ENCODE measurements at regions of chr1 and their contacts with region 1.

Region 1: DNA sequence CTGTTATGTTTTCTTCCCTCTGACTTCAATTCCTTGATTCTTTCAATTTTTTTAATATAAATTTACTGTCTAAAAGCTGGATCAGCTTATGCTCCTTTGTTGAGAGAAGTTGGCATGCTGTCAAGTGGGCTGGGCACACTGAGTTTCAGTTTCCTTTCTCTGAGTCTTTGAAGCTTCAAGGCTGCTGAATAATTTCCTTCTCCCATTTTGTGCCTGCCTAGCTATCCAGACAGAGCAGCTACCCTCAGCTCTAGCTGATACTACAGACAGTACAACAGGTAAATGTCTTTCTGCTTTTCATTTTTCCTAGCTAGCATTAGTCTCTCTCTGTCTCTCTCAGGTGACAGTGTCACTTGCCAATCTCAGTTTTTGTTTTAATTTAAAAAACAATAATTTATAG is at the start of gene IFI44:
- DNase-seq: peak; percentile 22 to 83 (median 79)
- ATAC-seq: peak; percentile 91
- H3K4me3 ChIP-seq: peak within 1 kb of the TSS; percentile 68
- H3K4me3 Mint-ChIP-seq: peak within 1 kb of the TSS; percentile 81 to 100 (median 92)
- H3K27ac ChIP-seq: peak within 1 kb of the TSS; percentile 67
- H3K27ac Mint-ChIP-seq: peak within 1 kb of the TSS; percentile 82 to 97 (median 93)
- H3K4me1 ChIP-seq: peaks cover 36 to 40% of the 10 kb centered on the region in 2 donors
- H3K4me1 Mint-ChIP-seq: peaks cover 39 to 80% (median 64%) of the 10 kb centered on the region in 7 donors
- H3K27me3 ChIP-seq: no peaks in the 10 kb centered on the region
- H3K27me3 Mint-ChIP-seq: no peaks in the 10 kb centered on the region
- total RNA-seq, gene IFI44: 24.3 to 142 (median 33.1) TPM

Region 2: GRCh38 chr1:77970192-77970591 is 679.4 kb before region 1 on chr1:
- CTCF ChIA-PET with region 1: no interaction called
- POLR2A ChIA-PET with region 1: no interaction called
- intact Hi-C with region 1: loop called in 1 of 2 experiments (anchors 5 kb)
- DNase-seq: no peak
- ATAC-seq: no peak
- H3K4me3 ChIP-seq: no peak overlapping the region
- H3K4me3 Mint-ChIP-seq: peak overlapping the region in 5 of 10 donors; percentile 23 to 75 (median 56)
- H3K27ac ChIP-seq: no peak overlapping the region
- H3K27ac Mint-ChIP-seq: no peak overlapping the region
- H3K4me1 ChIP-seq: peaks cover 43 to 58% of the 10 kb centered on the region in 2 donors
- H3K4me1 Mint-ChIP-seq: peaks cover 41 to 90% (median 77%) of the 10 kb centered on the region in 7 donors
- H3K27me3 ChIP-seq: no peaks in the 10 kb centered on the region
- H3K27me3 Mint-ChIP-seq: no peaks in the 10 kb centered on the region

Region 3: DNA sequence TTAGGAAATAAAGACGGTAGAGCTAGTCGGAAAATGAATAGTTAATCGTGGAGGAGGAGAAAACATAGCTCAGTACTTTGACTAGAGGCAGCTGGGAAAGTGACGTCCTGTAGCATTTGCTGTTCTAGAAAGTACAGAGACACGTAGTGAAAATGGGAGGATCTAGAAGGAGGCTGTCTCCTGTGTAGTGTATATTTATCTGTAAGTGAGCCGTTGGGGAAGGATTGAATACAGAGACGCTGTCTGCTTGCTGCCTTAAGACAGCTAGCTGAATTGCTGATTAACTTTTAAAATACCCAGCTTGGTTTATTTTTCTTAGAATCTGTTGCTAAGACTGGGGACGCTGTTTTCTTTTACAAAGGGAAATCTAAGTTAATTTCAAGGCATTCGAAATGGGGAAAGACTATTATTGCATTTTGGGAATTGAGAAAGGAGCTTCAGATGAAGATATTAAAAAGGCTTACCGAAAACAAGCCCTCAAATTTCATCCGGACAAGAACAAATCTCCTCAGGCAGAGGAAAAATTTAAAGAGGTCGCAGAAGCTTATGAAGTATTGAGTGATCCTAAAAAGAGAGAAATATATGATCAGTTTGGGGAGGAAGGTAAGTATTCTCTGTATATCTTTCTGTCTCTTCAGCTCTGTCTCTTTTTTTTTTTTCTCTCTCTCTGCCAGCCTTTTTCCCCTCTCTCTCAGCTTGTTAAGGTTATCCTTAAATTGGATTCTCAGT is 644.7 kb before region 1 on chr1 and contains the start of gene DNAJB4:
- CTCF ChIA-PET with region 1: no interaction called
- POLR2A ChIA-PET with region 1: no interaction called
- intact Hi-C with region 1: loop called in 1 of 2 experiments (anchors 2 kb)
- DNase-seq: peak in 8 of 9 donors; percentile 30 to 92 (median 87)
- ATAC-seq: peak; percentile 99
- H3K4me3 ChIP-seq: peak within 1 kb of the TSS; percentile 57
- H3K4me3 Mint-ChIP-seq: peak within 1 kb of the TSS; percentile 87 to 99 (median 92)
- H3K27ac ChIP-seq: peak within 1 kb of the TSS; percentile 95
- H3K27ac Mint-ChIP-seq: peak within 1 kb of the TSS; percentile 92 to 100 (median 99)
- H3K4me1 ChIP-seq: peaks cover 8 to 17% of the 10 kb centered on the region in 2 donors
- H3K4me1 Mint-ChIP-seq: peaks cover 9 to 57% (median 53%) of the 10 kb centered on the region in 7 donors
- H3K27me3 ChIP-seq: no peaks in the 10 kb centered on the region
- H3K27me3 Mint-ChIP-seq: peaks cover 0 to 3% (median 0%) of the 10 kb centered on the region in 5 donors
- total RNA-seq, gene DNAJB4: 11.4 to 20.1 (median 18.2) TPM

Region 4: GRCh38 chr1:78664763-78665162 is 15.1 kb after region 1 on chr1:
- CTCF ChIA-PET with region 1: no interaction called
- POLR2A ChIA-PET with region 1: interaction called, 3 read pairs
- intact Hi-C with region 1: loop called in 1 of 2 experiments (anchors 1 kb)
- DNase-seq: no peak
- ATAC-seq: no peak
- H3K4me3 ChIP-seq: no peak overlapping the region
- H3K4me3 Mint-ChIP-seq: no peak overlapping the region
- H3K27ac ChIP-seq: no peak overlapping the region
- H3K27ac Mint-ChIP-seq: peak overlapping the region in 2 of 9 donors; percentile 6 to 12
- H3K4me1 ChIP-seq: no peaks in the 10 kb centered on the region
- H3K4me1 Mint-ChIP-seq: peaks cover 0 to 16% (median 4%) of the 10 kb centered on the region in 7 donors
- H3K27me3 ChIP-seq: no peaks in the 10 kb centered on the region
- H3K27me3 Mint-ChIP-seq: no peaks in the 10 kb centered on the region

Region 5: DNA sequence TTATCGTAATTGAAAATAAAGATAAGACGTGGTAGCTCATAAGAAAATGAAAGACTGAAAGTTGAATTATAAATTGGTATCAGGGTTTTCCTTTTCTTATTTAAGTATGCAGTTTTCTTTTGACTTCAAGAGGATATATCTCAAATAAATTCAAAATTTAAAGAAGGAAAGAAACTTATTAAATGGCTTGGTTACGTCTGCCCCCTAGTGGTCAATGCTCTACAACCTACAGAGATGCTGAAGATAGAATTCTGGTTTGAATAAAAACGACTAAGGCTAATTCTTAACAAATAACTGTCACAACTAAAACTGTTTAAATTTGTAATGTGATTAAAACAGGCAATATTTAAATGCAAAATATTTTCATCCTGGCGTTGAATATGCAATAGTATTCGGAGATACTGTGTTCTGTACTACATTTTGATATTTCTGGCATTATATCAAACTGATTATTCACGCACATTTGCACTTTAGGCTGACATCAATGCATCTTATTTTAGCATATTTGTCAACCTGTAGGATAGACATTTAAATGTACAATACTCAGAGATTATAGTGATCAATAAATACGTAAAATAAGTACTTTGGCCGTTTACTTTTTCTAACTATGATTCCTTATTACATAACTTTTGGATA is 26.8 kb after region 1 on chr1:
- CTCF ChIA-PET with region 1: interaction called, 3 read pairs
- POLR2A ChIA-PET with region 1: interaction called, 3 read pairs
- intact Hi-C with region 1: loop called (anchors 1 to 2 kb)
- DNase-seq: peak in 7 of 9 donors; percentile 38 to 72 (median 62)
- ATAC-seq: peak; percentile 67
- H3K4me3 ChIP-seq: no peak overlapping the region
- H3K4me3 Mint-ChIP-seq: no peak overlapping the region
- H3K27ac ChIP-seq: no peak overlapping the region
- H3K27ac Mint-ChIP-seq: no peak overlapping the region
- H3K4me1 ChIP-seq: no peaks in the 10 kb centered on the region
- H3K4me1 Mint-ChIP-seq: peaks cover 3 to 33% (median 6%) of the 10 kb centered on the region in 7 donors
- H3K27me3 ChIP-seq: no peaks in the 10 kb centered on the region
- H3K27me3 Mint-ChIP-seq: peaks cover 0 to 6% (median 0%) of the 10 kb centered on the region in 5 donors